Activated CD4-positive, alpha-beta memory T cell treated with anti-CD3 and anti-CD28 coated beads, Interleukin-2, amount 10 ng/mL, durations not matched to agents 7 days and 5 days (primary cell): ENCODE measurements at regions of chr4 and their contacts with region 1.

Region 1: DNA sequence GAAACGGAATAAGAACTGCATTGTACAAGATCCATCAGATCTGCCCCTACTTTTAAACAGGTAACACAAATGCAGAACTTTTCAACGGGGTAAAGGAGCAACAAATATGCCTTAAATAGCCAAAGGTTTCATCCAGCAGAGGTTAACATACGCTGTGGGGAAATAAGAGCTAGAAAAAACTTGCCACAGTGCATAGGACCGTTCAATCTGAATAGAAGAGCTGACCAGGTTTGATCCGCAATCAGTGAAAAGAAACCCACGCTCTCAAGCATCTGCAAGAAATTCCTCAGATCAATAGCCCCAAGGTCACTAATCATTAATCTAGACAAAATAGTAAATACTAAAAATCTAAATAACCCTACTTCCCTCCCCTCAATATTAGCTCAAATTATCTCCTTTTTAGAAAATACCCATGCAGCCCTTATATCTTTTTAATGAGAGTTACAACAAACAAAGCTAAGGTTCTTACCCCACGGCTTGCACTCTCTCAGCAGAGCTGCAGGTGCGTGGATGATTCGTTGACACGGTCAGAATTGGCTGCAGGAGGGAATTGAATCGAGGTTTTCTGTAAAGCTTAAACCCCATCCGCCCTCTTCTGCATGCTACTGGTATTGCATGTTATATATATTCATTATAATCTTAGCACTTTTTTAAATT is at the start of gene TLR10:
- DNase-seq: peak; percentile 32
- H3K4me3 Mint-ChIP-seq: no peak within 1 kb of the TSS
- H3K27ac Mint-ChIP-seq: no peak within 1 kb of the TSS
- H3K4me1 Mint-ChIP-seq: peaks cover 2% of the 10 kb centered on the region
- H3K27me3 Mint-ChIP-seq: peaks cover 6% of the 10 kb centered on the region
- total RNA-seq, gene TLR10: 0.40 to 0.53 TPM

Region 2: DNA sequence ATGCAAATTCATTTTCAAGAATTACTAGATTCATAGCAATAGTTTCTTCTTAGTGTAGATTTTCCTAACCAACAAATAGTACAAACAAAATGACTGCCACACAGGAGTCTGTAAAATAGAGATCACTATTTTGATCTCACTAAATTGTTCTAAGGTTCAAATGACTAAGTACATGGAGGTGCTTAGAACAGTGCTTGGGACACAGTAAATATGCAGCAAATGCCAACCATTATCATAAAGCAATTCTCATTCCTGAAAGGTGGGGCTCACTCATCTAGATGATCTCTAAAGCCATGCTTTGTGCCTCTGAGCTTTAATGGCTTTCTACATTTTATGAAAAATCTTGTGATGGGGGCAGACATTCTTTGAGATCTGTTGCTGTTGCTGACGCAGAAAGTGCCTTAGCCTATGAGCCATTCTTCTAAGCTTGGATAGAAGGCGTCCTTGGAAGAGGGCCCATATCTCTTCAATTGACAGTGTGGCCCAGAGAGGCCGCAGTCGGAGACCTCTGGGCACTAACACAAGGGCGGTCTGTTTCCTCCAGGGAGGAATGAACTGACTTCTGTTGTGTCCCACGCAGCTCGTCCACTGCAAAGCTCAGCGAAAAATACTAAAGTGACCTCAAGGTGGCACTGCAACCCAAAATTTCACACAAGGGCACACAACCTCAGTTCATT is 23.3 kb before region 1 on chr4:
- CTCF ChIA-PET with region 1: interaction called, 74 read pairs
- POLR2A ChIA-PET with region 1: interaction called, 3 read pairs
- DNase-seq: peak; percentile 61
- H3K4me3 Mint-ChIP-seq: no peak overlapping the region
- H3K27ac Mint-ChIP-seq: no peak overlapping the region
- H3K4me1 Mint-ChIP-seq: peaks cover 21% of the 10 kb centered on the region
- H3K27me3 Mint-ChIP-seq: no peaks in the 10 kb centered on the region

Region 3: DNA sequence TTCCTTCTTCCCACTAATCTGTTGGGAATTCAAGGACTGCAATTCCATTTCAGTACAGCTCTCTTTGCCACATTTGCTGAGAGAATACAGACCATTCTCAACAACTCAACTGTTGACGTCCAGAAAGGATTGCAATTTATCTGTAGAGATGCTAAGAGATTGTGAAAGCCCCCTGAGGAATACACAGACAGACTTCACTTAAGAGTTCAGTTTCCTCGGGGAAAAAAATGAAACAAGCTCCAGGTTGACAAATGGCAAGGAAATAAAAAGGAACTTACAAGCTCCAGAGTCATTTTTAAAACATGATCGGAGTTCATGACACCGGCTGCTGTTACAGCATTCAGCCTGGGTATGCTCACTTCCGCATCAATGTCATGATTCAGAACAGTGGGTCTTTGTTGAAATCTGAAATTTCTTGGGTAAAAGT is 13.6 kb before region 1 on chr4:
- CTCF ChIA-PET with region 1: interaction called, 12 read pairs
- POLR2A ChIA-PET with region 1: no interaction called
- DNase-seq: no peak
- H3K4me3 Mint-ChIP-seq: no peak overlapping the region
- H3K27ac Mint-ChIP-seq: no peak overlapping the region
- H3K4me1 Mint-ChIP-seq: no peaks in the 10 kb centered on the region
- H3K27me3 Mint-ChIP-seq: peaks cover 19% of the 10 kb centered on the region

Region 4: DNA sequence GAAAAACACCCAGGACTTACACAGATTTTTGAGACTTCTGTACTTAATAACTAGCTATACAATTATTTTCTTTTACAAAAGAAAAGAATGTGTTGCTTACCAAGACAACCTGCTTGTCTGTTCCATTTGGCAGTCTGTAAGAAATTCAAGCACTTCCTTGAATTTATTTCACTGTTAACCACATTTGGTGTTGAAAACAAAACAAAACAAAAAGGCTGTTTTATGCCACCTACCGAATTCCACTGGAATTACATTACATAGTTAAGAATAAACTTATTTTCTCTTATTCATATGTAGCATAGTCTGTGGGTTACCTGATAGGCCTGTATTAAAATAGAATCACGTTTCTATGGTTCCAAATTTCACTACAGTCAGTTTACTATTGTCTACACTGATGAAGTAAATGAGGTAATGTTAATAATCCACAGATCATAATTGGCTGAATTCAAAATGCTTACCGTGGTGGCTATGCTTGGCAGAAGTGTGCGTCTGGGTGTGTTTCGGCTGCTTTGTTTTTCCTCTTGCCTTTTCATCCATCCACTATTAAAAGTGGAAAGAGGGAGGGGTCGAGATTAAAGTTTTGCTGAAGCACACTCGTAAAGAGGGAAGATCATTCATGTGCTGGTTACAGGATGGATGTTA is 22.2 kb after region 1 on chr4 and contains the start of gene TLR1:
- CTCF ChIA-PET with region 1: interaction called, 17 read pairs
- POLR2A ChIA-PET with region 1: interaction called, 8 read pairs
- DNase-seq: no peak
- H3K4me3 Mint-ChIP-seq: peak within 1 kb of the TSS; percentile 80
- H3K27ac Mint-ChIP-seq: peak within 1 kb of the TSS; percentile 85
- H3K4me1 Mint-ChIP-seq: peaks cover 37% of the 10 kb centered on the region
- H3K27me3 Mint-ChIP-seq: no peaks in the 10 kb centered on the region
- total RNA-seq, gene TLR1: 11.7 to 12.0 TPM